ENCODE measurements at regions of chr15 and their contacts with region 1.

Region 1: DNA sequence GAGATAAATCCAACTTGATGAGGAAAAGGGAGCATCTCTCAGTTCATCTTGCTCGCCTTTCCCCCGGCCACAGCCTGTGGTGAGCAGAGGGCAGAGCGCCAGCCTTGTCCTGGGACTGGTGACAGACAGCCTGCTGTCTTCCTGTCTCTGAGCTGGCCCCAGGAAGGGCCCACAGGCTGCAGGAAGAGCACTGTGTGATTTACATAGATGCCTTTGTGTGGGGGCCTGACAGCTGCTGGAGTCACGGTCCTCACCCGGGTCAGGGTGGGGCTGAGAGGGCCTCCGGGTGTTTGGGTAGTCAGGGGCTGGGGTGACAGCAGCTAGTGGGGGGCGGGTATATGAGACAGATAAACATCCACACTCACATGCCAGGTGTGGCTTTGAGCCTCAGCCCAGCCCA is 29.3 kb downstream of the PLA2G4D start:
- DNase-seq: no peak
- H3K4me3 Mint-ChIP-seq: no peak overlapping the region
- H3K27ac Mint-ChIP-seq: no peak overlapping the region
- H3K4me1 Mint-ChIP-seq: peaks cover 2% of the 10 kb centered on the region
- H3K27me3 Mint-ChIP-seq: peaks cover 16% of the 10 kb centered on the region

Region 2: DNA sequence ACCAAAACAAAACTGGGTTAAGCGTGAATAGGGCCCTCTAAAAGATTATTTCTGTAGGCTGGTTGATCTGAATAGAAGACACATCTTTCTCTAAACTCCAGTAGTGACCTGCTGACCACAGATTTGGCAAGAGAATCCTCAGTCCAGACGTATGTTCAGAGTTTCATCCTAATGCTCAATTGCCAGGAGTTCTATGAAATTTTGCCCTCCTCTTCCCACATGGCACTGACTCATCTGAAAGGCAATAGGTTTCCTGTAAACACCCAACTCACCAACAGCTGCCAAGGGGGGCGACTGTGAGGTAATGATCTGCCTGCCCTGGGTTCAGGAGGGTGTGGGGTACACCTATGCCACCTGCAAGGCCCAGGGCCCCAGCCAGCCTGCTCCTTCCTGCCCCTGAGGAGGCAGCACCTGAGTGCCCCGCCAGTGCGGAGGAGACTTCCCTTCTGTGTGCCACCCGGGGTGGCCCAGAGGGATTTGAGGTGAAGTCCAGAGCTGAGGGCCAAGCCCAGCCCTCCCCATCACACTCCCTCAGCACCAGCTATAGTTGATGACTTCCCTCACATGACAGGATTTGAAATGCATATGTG is 37.7 kb after region 1 on chr15:
- intact Hi-C with region 1: no loop called
- DNase-seq: no peak
- H3K4me3 Mint-ChIP-seq: no peak overlapping the region
- H3K27ac Mint-ChIP-seq: no peak overlapping the region
- H3K4me1 Mint-ChIP-seq: peaks cover 6% of the 10 kb centered on the region
- H3K27me3 Mint-ChIP-seq: peaks cover 9% of the 10 kb centered on the region

Region 3: GRCh38 chr15:42137431-42138261 is 72.6 kb after region 1 on chr15:
- intact Hi-C with region 1: loop called (anchors 5 kb)
- DNase-seq: no peak
- H3K4me3 Mint-ChIP-seq: no peak overlapping the region
- H3K27ac Mint-ChIP-seq: no peak overlapping the region
- H3K4me1 Mint-ChIP-seq: no peaks in the 10 kb centered on the region
- H3K27me3 Mint-ChIP-seq: peaks cover 4% of the 10 kb centered on the region

Region 4: GRCh38 chr15:42226648-42227047 is 161.6 kb after region 1 on chr15:
- intact Hi-C with region 1: no loop called
- DNase-seq: no peak
- H3K4me3 Mint-ChIP-seq: no peak overlapping the region
- H3K27ac Mint-ChIP-seq: no peak overlapping the region
- H3K4me1 Mint-ChIP-seq: no peaks in the 10 kb centered on the region
- H3K27me3 Mint-ChIP-seq: no peaks in the 10 kb centered on the region

Measured in activated T-helper 2 cell treated with anti-CD3 and anti-CD28 coated beads, Interferon-gamma antibody, Interleukin-2, Interleukin-4, amounts not matched to agents 10 μg/mL and 5 μg/mL and 100 μg/mL, durations not matched to agents 14 hours and 24 hours and 36 hours (primary cell).